Tibial artery (tissue), 4 donors: ENCODE measurements at regions of chr3 and their contacts with region 1.

Region 1: GRCh38 chr3:25648107-25648535 is 16.6 kb downstream of the TOP2B start:
- DNase-seq: peak in 1 of 2 donors; percentile 64
- H3K4me3 ChIP-seq: no peak overlapping the region
- H3K27ac ChIP-seq: no peak overlapping the region
- H3K4me1 ChIP-seq: peaks cover 0 to 24% (median 1%) of the 10 kb centered on the region in 4 donors
- H3K27me3 ChIP-seq: no peaks in the 10 kb centered on the region
- CTCF ChIP-seq: peak; percentile 70 to 73

Region 2: DNA sequence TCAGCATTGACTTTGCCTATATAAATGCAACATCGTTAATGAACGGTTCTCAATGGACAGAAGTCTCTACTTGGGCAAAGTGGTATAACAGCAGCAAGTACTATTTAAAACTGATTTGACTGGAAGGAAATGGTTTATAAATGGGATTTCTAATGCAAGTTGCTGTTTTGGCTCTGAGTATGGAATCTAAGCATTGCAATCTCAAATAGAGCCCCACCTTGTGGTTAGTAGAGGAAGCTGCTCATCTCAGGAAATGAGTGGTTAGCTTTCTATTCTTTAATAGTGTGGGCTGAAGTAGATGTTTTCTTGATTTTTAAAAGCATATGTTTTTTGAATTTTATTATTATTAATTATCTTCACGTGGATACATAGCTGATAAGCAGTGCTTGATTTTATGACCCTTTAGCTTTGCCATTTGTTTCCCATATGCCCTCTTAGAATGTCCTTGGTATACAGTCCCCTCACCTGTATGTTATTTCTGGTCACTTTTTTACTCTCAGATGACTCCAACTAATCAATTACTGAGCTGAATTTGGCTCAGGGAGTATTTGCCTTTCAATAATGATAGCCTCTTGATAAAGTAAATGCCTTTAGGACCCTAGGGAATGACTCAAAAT is 208.9 kb after region 1 on chr3:
- intact Hi-C with region 1: loop called (anchors 5 kb)
- DNase-seq: no peak
- H3K4me3 ChIP-seq: no peak overlapping the region
- H3K27ac ChIP-seq: no peak overlapping the region
- H3K4me1 ChIP-seq: peaks cover 0 to 11% (median 0%) of the 10 kb centered on the region in 4 donors
- H3K27me3 ChIP-seq: no peaks in the 10 kb centered on the region
- CTCF ChIP-seq: peak; percentile 45 to 61

Region 3: DNA sequence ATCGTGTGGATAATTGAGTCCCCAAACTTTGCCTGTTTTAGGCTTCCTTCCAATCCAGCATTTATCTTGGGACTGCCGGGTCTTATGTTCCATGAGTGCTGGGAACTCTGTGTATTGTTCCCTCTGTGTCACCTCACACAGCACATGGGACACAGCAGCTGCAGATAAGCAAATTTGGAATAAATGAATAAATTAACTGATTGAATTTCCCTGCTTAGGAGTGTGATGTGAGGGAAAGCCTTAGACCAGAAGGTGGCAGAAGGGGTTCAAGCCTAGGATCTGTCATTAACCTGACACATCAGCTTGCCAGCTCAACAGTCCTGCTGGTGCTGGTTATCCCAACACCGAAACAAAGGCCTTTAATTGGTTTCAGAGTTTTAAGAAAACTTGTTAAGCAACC is 256.1 kb after region 1 on chr3:
- intact Hi-C with region 1: no loop called
- DNase-seq: no peak
- H3K4me3 ChIP-seq: no peak overlapping the region
- H3K27ac ChIP-seq: no peak overlapping the region
- H3K4me1 ChIP-seq: peaks cover 0 to 5% (median 0%) of the 10 kb centered on the region in 4 donors
- H3K27me3 ChIP-seq: no peaks in the 10 kb centered on the region
- CTCF ChIP-seq: no peak